Sciatic nerve (tissue), 2 donors: ENCODE measurements at regions of chr1 and their contacts with region 1.

Region 1: DNA sequence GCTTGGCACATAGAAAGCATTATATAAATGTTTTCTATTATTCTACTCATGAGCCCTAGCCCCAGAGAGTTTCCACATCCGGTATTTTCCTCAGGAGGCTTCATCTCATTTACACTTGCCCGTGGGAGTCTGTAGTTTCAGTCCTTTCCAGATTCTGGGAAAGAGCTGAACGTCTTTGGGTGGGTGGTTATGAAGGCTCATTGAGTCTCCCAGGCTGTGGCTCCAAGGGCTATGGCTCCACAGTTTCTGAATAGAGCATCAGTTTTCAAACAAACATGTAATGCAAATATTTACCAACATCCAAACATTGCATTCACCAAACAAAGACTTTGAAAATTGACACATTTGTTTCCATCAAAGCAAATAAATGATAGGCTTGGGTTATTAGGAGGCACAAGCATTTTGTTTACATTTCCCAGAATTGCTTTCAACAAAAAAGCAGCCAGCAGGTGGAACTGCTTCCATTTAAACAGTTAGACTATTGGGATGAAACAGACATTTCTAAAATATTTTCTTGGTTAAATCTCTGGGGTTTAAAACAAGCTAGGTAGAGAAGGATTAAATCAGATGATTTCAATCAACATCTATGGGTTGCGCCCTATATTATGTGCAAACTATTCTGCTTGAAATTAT is 1.3 kb upstream of the LEMD1 start:
- DNase-seq: no peak
- ATAC-seq: no peak

Region 2: GRCh38 chr1:205354259-205354904 is 68.7 kb before region 1 on chr1:
- intact Hi-C with region 1: loop called (anchors 10 kb)
- DNase-seq: peak; percentile 72
- ATAC-seq: peak; percentile 69

Region 3: DNA sequence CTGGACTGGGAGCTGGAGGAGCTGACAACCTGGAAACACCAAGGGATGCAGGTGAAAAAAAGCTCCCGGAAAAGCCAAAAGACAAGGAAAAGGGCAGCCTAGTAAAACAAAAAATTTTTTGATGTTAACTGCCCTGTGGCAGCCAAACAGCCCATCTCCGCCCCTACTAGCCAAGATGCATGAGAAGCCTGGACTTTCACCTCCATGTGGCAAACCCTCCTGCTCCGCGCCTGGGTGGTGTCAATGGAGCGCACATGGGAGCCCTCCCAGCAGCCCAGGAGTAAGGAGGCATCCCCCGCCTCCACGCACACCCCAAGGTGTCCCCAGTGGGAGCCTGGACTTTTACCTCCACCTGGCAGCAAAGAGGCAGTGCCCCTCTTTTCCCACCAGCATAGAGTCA is 31.7 kb before region 1 on chr1:
- intact Hi-C with region 1: no loop called
- DNase-seq: no peak
- ATAC-seq: no peak

Region 4: GRCh38 chr1:205440476-205441317 is 17.6 kb after region 1 on chr1:
- intact Hi-C with region 1: no loop called
- DNase-seq: peak; percentile 75
- ATAC-seq: peak; percentile 88